ENCODE measurements at regions of chr20 and their contacts with region 1.

Region 1: GRCh38 chr20:41095110-41095969 is 42.0 kb upstream of the PLCG1 start:
- DNase-seq: peak; percentile 14
- H3K4me3 ChIP-seq: no peak overlapping the region
- CTCF ChIP-seq: peak; percentile 67

Region 2: GRCh38 chr20:40797425-40797824 is 297.9 kb before region 1 on chr20:
- CTCF ChIA-PET with region 1: no interaction called
- POLR2A ChIA-PET with region 1: no interaction called
- DNase-seq: no peak
- H3K4me3 ChIP-seq: no peak overlapping the region
- CTCF ChIP-seq: peak; percentile 3

Region 3: DNA sequence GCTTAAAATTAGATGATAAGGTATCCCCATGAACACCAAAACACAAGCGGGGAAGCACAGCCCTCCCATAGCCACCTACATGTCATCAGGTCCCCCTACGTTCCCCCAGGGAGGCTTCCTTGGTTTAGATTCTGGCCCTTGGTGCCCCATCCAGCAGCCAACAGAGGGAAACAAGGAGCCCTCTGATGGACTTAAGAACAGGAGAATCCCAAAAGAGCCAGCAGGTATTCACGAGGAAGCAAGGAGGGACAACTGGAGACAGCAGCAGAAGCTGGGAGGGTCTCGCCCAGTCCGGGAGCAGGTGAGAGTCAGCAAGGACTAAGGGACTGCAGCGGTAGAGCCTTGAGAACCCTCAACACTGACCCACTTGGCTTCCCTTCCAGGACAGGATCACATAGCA is 125.1 kb before region 1 on chr20:
- CTCF ChIA-PET with region 1: interaction called, 182 read pairs
- POLR2A ChIA-PET with region 1: no interaction called
- DNase-seq: no peak
- H3K4me3 ChIP-seq: no peak overlapping the region
- CTCF ChIP-seq: no peak

Region 4: DNA sequence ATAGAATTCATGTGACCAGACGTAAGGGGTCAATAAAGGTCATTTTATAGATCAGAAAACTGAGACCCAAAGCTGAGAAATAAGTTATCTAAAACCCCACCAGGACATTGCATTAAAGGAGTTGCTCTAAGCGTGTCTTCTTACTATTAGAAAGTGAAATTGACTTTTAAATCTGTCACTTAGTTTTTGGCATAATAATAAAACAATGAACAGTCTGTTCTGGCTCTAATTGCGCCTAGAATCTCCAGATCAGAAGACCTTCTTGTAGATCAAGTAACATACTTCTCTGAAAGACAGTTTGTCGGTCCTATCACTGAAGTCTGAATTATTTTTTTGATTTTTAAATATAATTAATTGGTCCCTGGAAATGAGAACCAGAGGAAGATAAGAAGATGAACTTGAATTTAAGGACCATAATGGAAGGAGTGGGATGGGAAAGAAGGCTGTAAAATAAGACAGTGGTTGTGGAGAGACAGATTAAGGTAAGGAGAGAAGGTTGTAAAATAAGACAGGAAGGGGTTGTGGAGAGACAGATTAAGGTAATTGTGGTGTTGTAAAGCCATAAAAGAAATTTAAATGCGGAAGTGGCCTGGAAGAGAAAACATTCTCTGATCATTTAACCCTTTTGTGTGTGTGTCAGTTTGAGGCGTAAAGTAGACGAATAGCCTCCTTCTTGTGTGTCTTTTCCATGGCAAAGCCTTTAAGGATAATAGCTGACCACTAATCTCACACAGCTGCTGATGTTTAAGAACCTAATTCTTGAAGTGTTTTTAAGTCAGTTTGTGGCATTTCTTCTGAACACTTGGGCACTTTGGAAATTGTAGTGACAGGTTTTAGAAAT is 46.7 kb before region 1 on chr20:
- CTCF ChIA-PET with region 1: interaction called, 13 read pairs
- POLR2A ChIA-PET with region 1: no interaction called
- DNase-seq: no peak
- H3K4me3 ChIP-seq: no peak overlapping the region
- CTCF ChIP-seq: no peak

Region 5: GRCh38 chr20:41078329-41078728 is 17.0 kb before region 1 on chr20:
- CTCF ChIA-PET with region 1: interaction called, 111 read pairs
- POLR2A ChIA-PET with region 1: no interaction called
- DNase-seq: peak; percentile 33
- H3K4me3 ChIP-seq: no peak overlapping the region
- CTCF ChIP-seq: peak; percentile 37

Region 6: GRCh38 chr20:41110930-41111577 is 15.7 kb after region 1 on chr20:
- CTCF ChIA-PET with region 1: interaction called, 19 read pairs
- POLR2A ChIA-PET with region 1: no interaction called
- DNase-seq: no peak
- H3K4me3 ChIP-seq: no peak overlapping the region
- CTCF ChIP-seq: no peak

Region 7: GRCh38 chr20:41131594-41132387 is 36.5 kb after region 1 on chr20:
- CTCF ChIA-PET with region 1: no interaction called
- POLR2A ChIA-PET with region 1: no interaction called
- DNase-seq: no peak
- H3K4me3 ChIP-seq: no peak overlapping the region
- CTCF ChIP-seq: no peak